AG04450 (cell line): ENCODE measurements at regions of chr4 and their contacts with region 1.

Region 1: DNA sequence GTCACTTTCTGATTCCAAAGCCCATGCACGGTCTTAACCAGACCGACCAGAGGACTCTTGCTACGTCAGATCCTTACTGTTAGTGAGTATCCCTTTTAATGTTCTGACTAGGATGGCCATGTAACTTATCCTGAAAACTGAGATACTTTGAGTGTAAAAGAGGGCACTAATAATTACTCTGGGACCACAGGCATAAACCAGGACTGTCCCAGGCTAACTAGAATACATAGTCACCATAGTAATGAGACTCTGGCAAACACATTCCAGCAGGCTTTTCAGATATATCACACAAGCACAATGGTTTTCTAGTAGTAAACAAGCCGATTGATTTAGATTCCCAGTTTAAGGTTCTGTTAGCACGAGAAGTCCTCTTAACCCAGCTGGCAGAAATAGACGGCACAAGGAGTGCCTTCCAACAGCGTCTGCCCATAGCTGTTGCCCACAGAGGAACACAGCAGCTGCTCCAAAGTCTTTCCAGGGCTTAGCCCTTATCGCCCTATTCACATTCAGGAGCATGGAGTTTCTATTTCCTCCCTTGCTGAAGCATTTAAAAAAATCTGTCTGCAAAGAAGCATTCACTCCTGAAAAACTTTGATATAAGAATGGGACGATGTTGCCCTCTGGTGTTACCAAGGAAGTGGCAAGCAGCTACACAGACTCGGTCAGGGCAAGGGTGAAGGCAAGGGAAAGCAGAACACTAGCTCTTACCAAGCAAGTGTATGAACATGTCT is 92.4 kb downstream of the CXCL13 start:
- DNase-seq: peak; percentile 32
- H3K4me3 ChIP-seq: no peak overlapping the region
- H3K27ac ChIP-seq: no peak overlapping the region
- H3K27me3 ChIP-seq: peaks cover 5% of the 10 kb centered on the region
- CTCF ChIP-seq: peak; percentile 64

Region 2: GRCh38 chr4:77385124-77385969 is 312.7 kb before region 1 on chr4:
- CTCF ChIA-PET with region 1: interaction called, 19 read pairs
- POLR2A ChIA-PET with region 1: no interaction called
- DNase-seq: peak; percentile 34
- H3K4me3 ChIP-seq: no peak overlapping the region
- H3K27ac ChIP-seq: no peak overlapping the region
- H3K27me3 ChIP-seq: no peaks in the 10 kb centered on the region
- CTCF ChIP-seq: peak; percentile 84

Region 3: DNA sequence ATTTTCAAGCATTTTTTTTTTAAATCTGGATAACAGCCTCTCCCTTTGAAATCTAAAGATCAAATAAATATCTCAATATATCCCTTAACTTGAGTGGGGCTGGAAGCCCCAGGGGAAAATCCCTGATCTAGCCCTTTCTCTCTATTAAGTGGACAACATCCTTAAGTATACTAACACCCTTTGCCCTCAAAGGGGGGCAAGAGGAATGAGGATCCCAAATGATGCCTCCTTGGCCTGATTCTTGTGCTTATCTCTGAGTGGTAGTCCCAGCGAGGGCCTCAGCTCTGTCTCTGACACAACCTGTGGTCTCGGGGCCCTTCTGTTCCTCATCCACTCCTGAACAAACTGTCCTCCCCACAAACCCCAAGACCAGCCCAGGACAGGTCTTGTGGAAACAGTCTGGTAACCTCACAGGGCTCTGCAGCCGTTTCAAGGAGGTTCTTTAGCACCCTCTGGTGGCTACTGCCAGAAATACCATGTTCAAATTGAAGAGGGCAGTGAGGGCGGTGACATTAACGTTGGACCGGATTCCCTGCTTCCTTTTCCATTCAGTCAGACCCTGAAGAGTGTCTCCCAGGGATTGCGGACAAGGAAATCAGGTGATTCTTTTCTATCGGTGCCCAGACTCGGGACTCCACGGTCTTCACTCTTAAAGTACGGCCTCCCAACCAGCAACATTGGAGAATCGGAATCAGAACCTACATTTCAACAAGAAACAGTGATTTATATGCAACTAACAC is 79.5 kb before region 1 on chr4:
- CTCF ChIA-PET with region 1: interaction called, 11 read pairs
- POLR2A ChIA-PET with region 1: no interaction called
- DNase-seq: peak; percentile 30
- H3K4me3 ChIP-seq: no peak overlapping the region
- H3K27ac ChIP-seq: no peak overlapping the region
- H3K27me3 ChIP-seq: peaks cover 16% of the 10 kb centered on the region
- CTCF ChIP-seq: peak; percentile 88

Region 4: DNA sequence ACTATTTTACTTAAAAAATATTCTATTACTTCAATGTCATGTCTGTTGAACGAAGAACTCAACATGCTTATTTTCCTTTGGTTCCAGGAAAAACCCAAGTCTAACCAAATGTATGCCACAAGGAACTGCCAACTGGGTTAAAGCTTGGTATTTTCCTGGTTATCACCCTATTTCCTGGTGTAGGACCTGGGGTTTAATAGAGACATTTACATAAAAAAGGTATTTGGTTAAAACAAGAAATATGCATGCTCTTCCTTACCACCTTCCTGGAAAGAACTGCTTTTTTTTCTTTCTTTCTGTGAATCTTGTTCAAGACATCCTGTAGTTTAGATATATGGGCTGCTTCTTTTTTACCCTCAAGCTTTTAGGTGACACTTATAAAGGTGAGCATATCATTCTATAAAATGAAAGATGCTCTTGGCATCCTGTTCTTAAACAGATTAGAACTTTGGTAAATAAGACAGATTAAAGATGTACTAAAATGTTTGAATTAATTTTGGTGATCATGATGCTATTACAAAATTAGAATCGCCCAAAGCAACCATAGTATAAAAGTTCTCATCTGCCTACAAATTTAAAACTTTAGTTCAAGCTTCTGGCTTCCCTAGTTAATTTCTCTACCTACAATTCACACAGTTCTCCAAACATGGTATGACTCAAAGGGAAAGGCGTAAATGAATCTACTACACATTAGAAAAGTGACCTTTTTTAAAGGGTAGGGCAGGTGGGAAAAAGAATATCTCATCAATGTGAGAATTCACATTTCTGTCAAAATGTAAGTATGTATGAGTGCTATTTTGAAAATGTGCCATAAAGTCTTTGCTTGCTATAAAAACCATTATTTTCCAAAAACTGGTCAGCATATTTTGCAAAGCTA is 17.6 kb after region 1 on chr4:
- CTCF ChIA-PET with region 1: no interaction called
- POLR2A ChIA-PET with region 1: no interaction called
- DNase-seq: no peak
- H3K4me3 ChIP-seq: no peak overlapping the region
- H3K27ac ChIP-seq: no peak overlapping the region
- H3K27me3 ChIP-seq: no peaks in the 10 kb centered on the region
- CTCF ChIP-seq: no peak

Region 5: GRCh38 chr4:77994194-77994721 is 296.2 kb after region 1 on chr4:
- CTCF ChIA-PET with region 1: no interaction called
- POLR2A ChIA-PET with region 1: no interaction called
- DNase-seq: peak; percentile 23
- H3K4me3 ChIP-seq: no peak overlapping the region
- H3K27ac ChIP-seq: no peak overlapping the region
- H3K27me3 ChIP-seq: peaks cover 6% of the 10 kb centered on the region
- CTCF ChIP-seq: peak; percentile 78